CD14-positive monocyte (primary cell): ENCODE measurements at regions of chr11 and their contacts with region 1.

Region 1: GRCh38 chr11:76207642-76208401 is 1.5 kb upstream of the WNT11 start:
- DNase-seq: peak; percentile 67 to 75 (median 69)
- H3K4me3 ChIP-seq: peak overlapping the region; percentile 50 to 90 (median 53)
- H3K4me3 Mint-ChIP-seq: peak overlapping the region; percentile 84 to 95
- H3K27ac ChIP-seq: no peak overlapping the region
- H3K27ac Mint-ChIP-seq: peak overlapping the region in 2 of 7 donors; percentile 41 to 66
- H3K4me1 ChIP-seq: peaks cover 48 to 58% of the 10 kb centered on the region in 2 donors
- H3K4me1 Mint-ChIP-seq: peaks cover 38% of the 10 kb centered on the region
- H3K27me3 ChIP-seq: peaks cover 42 to 72% of the 10 kb centered on the region in 2 donors
- H3K27me3 Mint-ChIP-seq: peaks cover 57 to 97% (median 75%) of the 10 kb centered on the region in 3 donors
- CTCF ChIP-seq: peak; percentile 98

Region 2: GRCh38 chr11:75896843-75897419 is 310.9 kb before region 1 on chr11:
- intact Hi-C with region 1: loop called in 1 of 2 experiments (anchors 5 kb)
- DNase-seq: peak in 2 of 3 donors; percentile 18 to 51
- H3K4me3 ChIP-seq: no peak overlapping the region
- H3K4me3 Mint-ChIP-seq: no peak overlapping the region
- H3K27ac ChIP-seq: no peak overlapping the region
- H3K27ac Mint-ChIP-seq: no peak overlapping the region
- H3K4me1 ChIP-seq: peaks cover 27 to 43% of the 10 kb centered on the region in 2 donors
- H3K4me1 Mint-ChIP-seq: peaks cover 42% of the 10 kb centered on the region
- H3K27me3 ChIP-seq: no peaks in the 10 kb centered on the region
- H3K27me3 Mint-ChIP-seq: no peaks in the 10 kb centered on the region
- CTCF ChIP-seq: peak; percentile 82

Region 3: GRCh38 chr11:76251576-76251975 is 43.8 kb after region 1 on chr11:
- intact Hi-C with region 1: loop called in 1 of 2 experiments (anchors 5 kb)
- DNase-seq: peak; percentile 76 to 86 (median 80)
- H3K4me3 ChIP-seq: peak overlapping the region in 1 of 3 experiments; percentile 54
- H3K4me3 Mint-ChIP-seq: peak overlapping the region in 1 of 2 donors; percentile 12
- H3K27ac ChIP-seq: peak overlapping the region; percentile 71 to 81
- H3K27ac Mint-ChIP-seq: peak overlapping the region; percentile 81 to 95 (median 89)
- H3K4me1 ChIP-seq: peaks cover 39 to 41% of the 10 kb centered on the region in 2 donors
- H3K4me1 Mint-ChIP-seq: peaks cover 45% of the 10 kb centered on the region
- H3K27me3 ChIP-seq: no peaks in the 10 kb centered on the region
- H3K27me3 Mint-ChIP-seq: peaks cover 0 to 2% (median 0%) of the 10 kb centered on the region in 3 donors
- CTCF ChIP-seq: no peak

Region 4: DNA sequence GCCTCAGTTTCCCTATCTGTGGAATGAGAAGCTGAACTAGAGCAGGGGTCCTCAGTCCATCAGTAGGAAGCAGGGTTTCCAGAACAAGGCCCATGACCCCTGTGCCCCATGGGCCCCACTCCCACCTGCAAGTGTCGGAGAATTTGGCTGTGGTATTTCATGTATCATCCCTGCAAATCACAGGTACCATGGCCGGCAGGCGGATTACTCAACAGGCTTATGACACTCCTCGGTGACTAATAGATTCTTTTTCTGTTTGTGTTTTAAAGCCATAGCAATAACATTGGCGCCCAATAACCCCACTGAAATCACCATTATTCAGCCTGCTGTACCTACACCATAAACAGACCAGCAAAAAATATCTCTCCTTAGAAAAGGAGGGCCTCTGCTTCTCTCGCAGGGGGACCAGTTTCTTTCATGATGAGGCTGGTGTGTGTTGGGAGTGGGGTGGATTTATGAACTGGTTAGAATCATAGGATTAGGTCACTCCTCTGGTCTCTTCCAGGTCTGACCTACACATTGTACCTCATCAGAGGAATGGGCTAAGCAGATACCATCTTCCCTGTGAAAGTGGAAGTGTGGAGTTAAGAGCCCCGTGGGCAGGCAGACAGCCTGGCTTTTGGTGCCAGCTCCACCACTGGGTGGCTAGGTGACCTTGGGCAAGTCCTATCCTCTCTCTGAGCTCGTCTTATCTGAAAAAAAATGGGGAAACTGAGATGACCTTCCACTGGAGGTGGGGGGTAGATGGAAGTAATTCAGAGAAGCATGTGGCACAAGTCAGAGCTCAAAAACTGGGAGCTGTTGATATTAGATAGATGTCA is 58.7 kb after region 1 on chr11:
- intact Hi-C with region 1: no loop called
- DNase-seq: peak in 2 of 3 donors; percentile 23 to 48
- H3K4me3 ChIP-seq: no peak overlapping the region
- H3K4me3 Mint-ChIP-seq: no peak overlapping the region
- H3K27ac ChIP-seq: no peak overlapping the region
- H3K27ac Mint-ChIP-seq: peak overlapping the region; percentile 1 to 38 (median 15)
- H3K4me1 ChIP-seq: peaks cover 0 to 7% of the 10 kb centered on the region in 2 donors
- H3K4me1 Mint-ChIP-seq: peaks cover 14% of the 10 kb centered on the region
- H3K27me3 ChIP-seq: no peaks in the 10 kb centered on the region
- H3K27me3 Mint-ChIP-seq: peaks cover 2 to 10% (median 5%) of the 10 kb centered on the region in 3 donors
- CTCF ChIP-seq: no peak

Region 5: GRCh38 chr11:76380967-76381719 is 173.3 kb after region 1 on chr11 and contains the starts of genes GVQW3 and THAP12:
- intact Hi-C with region 1: loop called in 1 of 2 experiments (anchors 5 kb)
- DNase-seq: peak; percentile 97 to 98 (median 98)
- H3K4me3 ChIP-seq: peak within 1 kb of the TSS; percentile 70 to 93 (median 74)
- H3K4me3 Mint-ChIP-seq: peak within 1 kb of the TSS; percentile 96 to 97
- H3K27ac ChIP-seq: peak within 1 kb of the TSS; percentile 11 to 84
- H3K27ac Mint-ChIP-seq: peak within 1 kb of the TSS; percentile 88 to 96 (median 93)
- H3K4me1 ChIP-seq: peaks cover 28 to 37% of the 10 kb centered on the region in 2 donors
- H3K4me1 Mint-ChIP-seq: peaks cover 59% of the 10 kb centered on the region
- H3K27me3 ChIP-seq: no peaks in the 10 kb centered on the region
- H3K27me3 Mint-ChIP-seq: peaks cover 0 to 4% (median 0%) of the 10 kb centered on the region in 3 donors
- CTCF ChIP-seq: peak; percentile 39
- polyA plus RNA-seq, gene GVQW3: 0.15 to 1.1 TPM in 2 of 3 donors, not detected in the other
- polyA plus RNA-seq, gene THAP12: 18.3 to 22.5 (median 20.0) TPM

Region 6: GRCh38 chr11:76392870-76393269 is 185.0 kb after region 1 on chr11:
- intact Hi-C with region 1: no loop called
- DNase-seq: peak; percentile 15 to 43 (median 26)
- H3K4me3 ChIP-seq: no peak overlapping the region
- H3K4me3 Mint-ChIP-seq: peak overlapping the region in 1 of 2 donors; percentile 15
- H3K27ac ChIP-seq: no peak overlapping the region
- H3K27ac Mint-ChIP-seq: peak overlapping the region in 5 of 7 donors; percentile 25 to 84 (median 76)
- H3K4me1 ChIP-seq: peaks cover 0 to 3% of the 10 kb centered on the region in 2 donors
- H3K4me1 Mint-ChIP-seq: peaks cover 12% of the 10 kb centered on the region
- H3K27me3 ChIP-seq: no peaks in the 10 kb centered on the region
- H3K27me3 Mint-ChIP-seq: peaks cover 0 to 3% (median 1%) of the 10 kb centered on the region in 3 donors
- CTCF ChIP-seq: no peak

Region 7: GRCh38 chr11:76512851-76513653 is 305.2 kb after region 1 on chr11:
- intact Hi-C with region 1: loop called in 1 of 2 experiments (anchors 10 kb)
- DNase-seq: no peak
- H3K4me3 ChIP-seq: no peak overlapping the region
- H3K4me3 Mint-ChIP-seq: no peak overlapping the region
- H3K27ac ChIP-seq: no peak overlapping the region
- H3K27ac Mint-ChIP-seq: peak overlapping the region in 1 of 7 donors; percentile 12
- H3K4me1 ChIP-seq: no peaks in the 10 kb centered on the region
- H3K4me1 Mint-ChIP-seq: no peaks in the 10 kb centered on the region
- H3K27me3 ChIP-seq: no peaks in the 10 kb centered on the region
- H3K27me3 Mint-ChIP-seq: no peaks in the 10 kb centered on the region
- CTCF ChIP-seq: peak; percentile 13